ENCODE measurements at regions of chr2 and their contacts with region 1.

Region 1: DNA sequence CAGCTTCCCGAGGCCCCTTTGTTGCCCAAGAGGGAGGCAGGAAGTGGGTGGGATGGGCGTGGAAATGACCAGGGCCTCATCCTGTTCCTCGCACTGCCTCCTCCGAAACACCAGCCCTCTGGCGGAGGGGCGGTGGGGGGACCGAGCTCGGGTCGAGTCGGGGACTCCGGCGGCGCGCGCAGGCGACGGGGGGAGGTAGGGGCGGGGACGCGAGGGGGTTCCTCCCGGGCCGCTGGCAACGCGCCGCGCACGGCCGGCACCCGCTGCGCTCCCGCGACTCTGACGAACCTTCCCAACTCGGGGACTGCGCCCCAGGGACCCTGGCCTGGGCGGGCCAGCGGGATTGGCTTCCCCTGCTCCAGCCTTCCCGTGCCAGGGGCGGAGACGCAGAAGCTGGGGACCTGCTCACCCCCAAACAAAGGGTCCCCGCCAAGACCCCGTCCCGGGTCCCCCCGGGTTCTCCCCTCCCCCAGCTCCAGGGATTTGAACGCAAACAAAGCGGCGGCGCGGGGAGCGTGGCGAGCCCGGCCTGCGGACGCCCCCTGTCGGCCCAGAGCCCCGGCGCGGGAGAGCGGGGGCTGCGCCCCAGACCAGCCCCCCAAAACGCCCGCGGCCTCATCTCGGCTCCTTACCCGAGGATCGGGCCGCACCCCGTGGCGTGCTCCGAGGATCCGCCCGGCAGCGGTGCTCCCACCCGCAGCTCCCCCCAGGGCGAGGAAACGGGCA is 1.2 kb downstream of the SEMA4C start:
- DNase-seq: peak in 8 of 9 donors; percentile 37 to 71 (median 56)
- ATAC-seq: peak; percentile 37
- H3K4me3 ChIP-seq: peak overlapping the region; percentile 81
- H3K4me3 Mint-ChIP-seq: peak overlapping the region; percentile 81 to 95 (median 88)
- H3K27ac ChIP-seq: peak overlapping the region; percentile 84
- H3K27ac Mint-ChIP-seq: peak overlapping the region in 8 of 9 donors; percentile 75 to 92 (median 85)
- H3K4me1 ChIP-seq: peaks cover 24 to 32% of the 10 kb centered on the region in 2 donors
- H3K4me1 Mint-ChIP-seq: peaks cover 23 to 52% (median 42%) of the 10 kb centered on the region in 7 donors
- H3K27me3 ChIP-seq: no peaks in the 10 kb centered on the region
- H3K27me3 Mint-ChIP-seq: peaks cover 0 to 12% (median 0%) of the 10 kb centered on the region in 5 donors

Region 2: GRCh38 chr2:96888072-96889011 is 19.6 kb after region 1 on chr2:
- CTCF ChIA-PET with region 1: interaction called, 4 read pairs
- POLR2A ChIA-PET with region 1: interaction called, 13 read pairs
- intact Hi-C with region 1: loop called in 1 of 2 experiments (anchors 2 kb)
- DNase-seq: no peak
- ATAC-seq: peak; percentile 63
- H3K4me3 ChIP-seq: no peak overlapping the region
- H3K4me3 Mint-ChIP-seq: peak overlapping the region in 8 of 10 donors; percentile 0 to 60 (median 53)
- H3K27ac ChIP-seq: no peak overlapping the region
- H3K27ac Mint-ChIP-seq: peak overlapping the region; percentile 49 to 95 (median 86)
- H3K4me1 ChIP-seq: peaks cover 14 to 39% of the 10 kb centered on the region in 2 donors
- H3K4me1 Mint-ChIP-seq: peaks cover 37 to 64% (median 53%) of the 10 kb centered on the region in 7 donors
- H3K27me3 ChIP-seq: no peaks in the 10 kb centered on the region
- H3K27me3 Mint-ChIP-seq: no peaks in the 10 kb centered on the region

Region 3: DNA sequence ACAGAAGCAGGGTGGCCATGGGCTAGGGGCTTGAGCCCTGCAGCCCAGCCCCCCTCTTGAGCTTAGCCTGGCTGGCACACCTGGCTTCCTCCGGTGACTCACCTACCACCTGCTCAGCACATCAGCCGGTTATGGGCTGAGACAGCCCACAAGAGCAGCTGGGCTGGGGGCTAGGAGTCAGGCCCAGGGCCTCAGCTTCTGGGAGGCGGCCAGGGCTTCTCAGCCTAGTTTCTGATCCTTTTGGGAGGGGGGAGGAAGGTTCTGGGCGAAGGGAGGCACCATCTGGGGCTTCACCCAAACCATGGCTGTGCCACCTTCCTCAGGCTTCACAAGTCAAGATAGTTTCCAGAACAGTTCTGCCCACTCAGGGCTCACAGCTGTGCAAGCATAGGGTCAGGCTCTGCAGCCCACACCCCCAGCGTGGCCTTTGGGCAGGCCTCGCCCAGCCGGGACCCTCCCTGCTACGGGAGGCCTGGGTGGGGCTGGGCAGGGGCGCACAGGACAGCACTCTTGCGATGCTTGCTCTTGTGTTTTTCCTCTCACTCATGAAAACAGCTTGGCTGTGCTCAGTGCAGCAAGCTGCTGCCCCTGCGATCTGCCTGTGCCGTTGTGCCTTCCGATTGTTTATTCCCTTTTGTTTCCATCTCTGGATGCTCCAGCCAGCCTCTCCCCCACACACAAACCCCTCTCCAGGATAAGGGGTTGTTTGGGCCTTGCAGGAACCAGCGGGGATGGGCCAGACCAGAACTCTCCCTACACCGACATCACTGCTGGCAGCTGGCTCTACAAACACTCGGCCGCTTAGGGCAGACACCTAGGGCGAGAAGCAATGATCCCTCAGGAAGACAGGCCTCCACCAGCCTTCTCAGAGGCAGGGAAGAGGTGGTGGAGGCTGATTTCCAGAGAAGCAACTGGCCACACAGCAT is 27.3 kb after region 1 on chr2:
- CTCF ChIA-PET with region 1: interaction called, 4 read pairs
- POLR2A ChIA-PET with region 1: interaction called, 13 read pairs
- intact Hi-C with region 1: no loop called
- DNase-seq: no peak
- ATAC-seq: peak; percentile 41
- H3K4me3 ChIP-seq: no peak overlapping the region
- H3K4me3 Mint-ChIP-seq: peak overlapping the region in 7 of 10 donors; percentile 34 to 72 (median 52)
- H3K27ac ChIP-seq: no peak overlapping the region
- H3K27ac Mint-ChIP-seq: peak overlapping the region; percentile 56 to 88 (median 81)
- H3K4me1 ChIP-seq: peaks cover 24 to 47% of the 10 kb centered on the region in 2 donors
- H3K4me1 Mint-ChIP-seq: peaks cover 44 to 75% (median 68%) of the 10 kb centered on the region in 7 donors
- H3K27me3 ChIP-seq: no peaks in the 10 kb centered on the region
- H3K27me3 Mint-ChIP-seq: no peaks in the 10 kb centered on the region

Region 4: DNA sequence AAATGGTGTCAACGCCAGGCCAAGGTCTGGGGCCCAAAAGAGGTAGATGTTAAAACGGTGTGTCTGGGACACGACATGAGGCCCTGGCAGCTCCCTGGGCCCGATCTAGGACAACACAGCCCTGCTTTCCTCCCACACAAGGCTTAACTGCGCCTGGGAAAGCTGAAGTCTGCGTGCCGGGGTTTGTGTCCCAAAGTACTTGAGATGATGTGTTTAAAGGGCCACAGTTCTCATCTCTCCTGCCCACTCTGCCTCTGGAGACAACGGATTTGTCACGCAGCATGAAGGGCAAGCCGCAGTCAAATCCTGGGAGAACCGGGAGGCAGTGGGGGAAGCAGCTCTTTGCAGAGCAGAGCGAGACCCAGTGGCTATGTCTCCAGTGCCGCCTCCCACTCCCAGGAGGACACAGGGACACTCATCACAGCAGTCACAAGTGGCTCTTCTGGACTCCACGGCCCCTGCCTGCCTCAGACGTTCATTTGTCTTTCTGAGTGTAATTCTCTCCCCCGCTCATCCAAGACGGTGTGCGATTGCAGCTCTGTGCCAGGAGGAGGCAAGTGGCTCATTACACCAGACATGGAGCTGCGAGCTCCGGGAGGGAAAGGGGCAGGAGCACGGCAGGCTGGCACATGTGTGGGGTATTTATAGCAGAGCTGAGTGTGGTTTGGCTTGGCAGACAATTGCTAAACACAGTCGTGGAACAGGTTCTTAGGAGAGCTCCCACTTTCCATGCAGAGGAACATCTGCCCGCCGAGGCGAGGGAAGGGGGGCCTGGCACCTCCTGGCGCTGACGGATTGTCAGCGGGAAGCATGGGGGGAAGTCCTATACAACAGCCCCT is 58.9 kb after region 1 on chr2:
- CTCF ChIA-PET with region 1: interaction called, 3 read pairs
- POLR2A ChIA-PET with region 1: interaction called, 16 read pairs
- intact Hi-C with region 1: loop called in 1 of 2 experiments (anchors 1 kb)
- DNase-seq: no peak
- ATAC-seq: no peak
- H3K4me3 ChIP-seq: no peak overlapping the region
- H3K4me3 Mint-ChIP-seq: no peak overlapping the region
- H3K27ac ChIP-seq: no peak overlapping the region
- H3K27ac Mint-ChIP-seq: no peak overlapping the region
- H3K4me1 ChIP-seq: peaks cover 19 to 23% of the 10 kb centered on the region in 2 donors
- H3K4me1 Mint-ChIP-seq: peaks cover 16 to 44% (median 29%) of the 10 kb centered on the region in 7 donors
- H3K27me3 ChIP-seq: no peaks in the 10 kb centered on the region
- H3K27me3 Mint-ChIP-seq: peaks cover 0 to 26% (median 0%) of the 10 kb centered on the region in 5 donors

Region 5: GRCh38 chr2:96940001-96940615 is 71.4 kb after region 1 on chr2:
- CTCF ChIA-PET with region 1: interaction called, 4 read pairs
- POLR2A ChIA-PET with region 1: interaction called, 288 read pairs
- intact Hi-C with region 1: loop called in 1 of 2 experiments (anchors 2 kb)
- DNase-seq: no peak
- ATAC-seq: no peak
- H3K4me3 ChIP-seq: no peak overlapping the region
- H3K4me3 Mint-ChIP-seq: peak overlapping the region in 8 of 10 donors; percentile 50 to 92 (median 78)
- H3K27ac ChIP-seq: no peak overlapping the region
- H3K27ac Mint-ChIP-seq: peak overlapping the region in 8 of 9 donors; percentile 43 to 94 (median 80)
- H3K4me1 ChIP-seq: peaks cover 19 to 25% of the 10 kb centered on the region in 2 donors
- H3K4me1 Mint-ChIP-seq: peaks cover 24 to 55% (median 46%) of the 10 kb centered on the region in 7 donors
- H3K27me3 ChIP-seq: no peaks in the 10 kb centered on the region
- H3K27me3 Mint-ChIP-seq: peaks cover 0 to 10% (median 0%) of the 10 kb centered on the region in 5 donors

Region 6: DNA sequence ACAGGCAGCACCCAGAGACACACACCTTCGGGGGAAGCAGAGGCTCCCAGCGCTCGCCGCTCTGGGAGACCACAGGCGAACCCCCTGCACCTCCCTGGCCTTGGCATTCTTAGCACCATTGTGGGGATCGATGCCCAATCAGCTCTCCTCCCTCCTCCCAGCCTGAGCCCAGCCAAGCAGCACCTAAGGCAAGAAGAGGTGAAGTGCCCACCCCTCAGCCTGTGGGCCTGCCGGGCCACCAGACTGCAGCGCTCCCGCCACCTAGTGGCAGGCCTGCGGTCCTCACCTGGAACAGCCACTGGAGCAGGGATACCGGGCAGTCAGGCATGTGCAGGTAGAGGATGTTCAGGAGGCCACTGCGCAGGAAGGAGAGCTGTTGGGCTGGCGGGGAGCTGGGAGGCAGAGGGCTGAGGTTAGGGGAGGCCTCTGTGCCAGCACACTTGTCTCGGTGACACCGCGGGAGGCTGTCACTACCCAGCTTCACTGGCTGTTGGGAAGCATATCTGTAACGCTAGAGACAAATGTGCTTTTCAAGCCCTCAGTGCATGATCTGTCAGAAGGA is 82.5 kb after region 1 on chr2:
- CTCF ChIA-PET with region 1: interaction called, 11 read pairs
- POLR2A ChIA-PET with region 1: interaction called, 288 read pairs
- intact Hi-C with region 1: loop called (anchors 1 kb)
- DNase-seq: peak; percentile 68 to 85 (median 80)
- ATAC-seq: peak; percentile 93
- H3K4me3 ChIP-seq: no peak overlapping the region
- H3K4me3 Mint-ChIP-seq: peak overlapping the region in 1 of 10 donors; percentile 61
- H3K27ac ChIP-seq: no peak overlapping the region
- H3K27ac Mint-ChIP-seq: peak overlapping the region in 6 of 9 donors; percentile 26 to 80 (median 61)
- H3K4me1 ChIP-seq: peaks cover 13 to 14% of the 10 kb centered on the region in 2 donors
- H3K4me1 Mint-ChIP-seq: peaks cover 14 to 40% (median 20%) of the 10 kb centered on the region in 7 donors
- H3K27me3 ChIP-seq: no peaks in the 10 kb centered on the region
- H3K27me3 Mint-ChIP-seq: peaks cover 0 to 2% (median 0%) of the 10 kb centered on the region in 5 donors